ENCODE measurements at regions of chr9 and their contacts with region 1.

Region 1: GRCh38 chr9:74773886-74774479 is 113.7 kb downstream of the TRPM6 start:
- DNase-seq: peak; percentile 81
- ATAC-seq: peak; percentile 75
- H3K4me3 ChIP-seq: no peak overlapping the region
- H3K27ac ChIP-seq: no peak overlapping the region
- H3K4me1 ChIP-seq: no peaks in the 10 kb centered on the region
- H3K27me3 ChIP-seq: no peaks in the 10 kb centered on the region
- CTCF ChIP-seq: peak; percentile 86

Region 2: DNA sequence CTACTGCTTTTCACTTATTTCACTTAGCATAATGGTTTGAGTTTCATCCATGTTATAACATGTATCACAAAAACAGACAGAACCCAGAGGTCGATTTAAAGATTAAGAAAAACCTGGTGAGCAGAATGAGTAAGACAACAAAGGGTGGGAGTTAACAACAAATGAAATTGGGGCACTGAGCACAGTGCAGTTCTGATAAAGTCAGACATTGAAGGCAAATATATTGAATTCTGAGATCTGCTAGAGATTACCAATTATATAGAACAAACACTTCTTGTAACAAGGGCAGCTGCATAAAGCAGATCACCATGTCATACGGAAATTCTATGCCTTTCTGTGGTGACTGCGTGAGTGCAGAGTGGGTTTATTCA is 794.1 kb before region 1 on chr9:
- CTCF ChIA-PET with region 1: no interaction called
- POLR2A ChIA-PET with region 1: no interaction called
- intact Hi-C with region 1: no loop called
- DNase-seq: no peak
- ATAC-seq: no peak
- H3K4me3 ChIP-seq: no peak overlapping the region
- H3K27ac ChIP-seq: no peak overlapping the region
- H3K4me1 ChIP-seq: no peaks in the 10 kb centered on the region
- H3K27me3 ChIP-seq: no peaks in the 10 kb centered on the region
- CTCF ChIP-seq: no peak

Region 3: DNA sequence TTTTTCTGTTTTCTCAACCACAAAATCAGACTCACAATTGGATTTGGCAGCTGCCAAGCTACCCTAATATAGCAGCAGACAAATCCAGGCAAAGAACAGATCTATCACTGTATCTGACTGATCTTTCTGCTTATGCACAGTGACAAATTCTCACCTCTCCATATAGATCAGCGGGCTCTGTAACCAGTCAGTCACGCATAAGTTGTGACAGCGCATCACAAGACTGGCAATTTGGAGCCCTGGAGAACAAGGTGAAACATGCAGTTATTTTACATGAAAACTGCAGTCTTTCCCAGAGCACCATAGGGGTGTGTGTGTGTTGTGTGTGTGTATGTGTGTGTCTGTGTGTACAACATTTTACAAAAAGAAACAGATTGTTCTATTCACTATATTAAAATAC is 239.1 kb before region 1 on chr9:
- CTCF ChIA-PET with region 1: no interaction called
- POLR2A ChIA-PET with region 1: no interaction called
- intact Hi-C with region 1: no loop called
- DNase-seq: no peak
- ATAC-seq: no peak
- H3K4me3 ChIP-seq: no peak overlapping the region
- H3K27ac ChIP-seq: no peak overlapping the region
- H3K4me1 ChIP-seq: no peaks in the 10 kb centered on the region
- H3K27me3 ChIP-seq: no peaks in the 10 kb centered on the region
- CTCF ChIP-seq: no peak

Region 4: GRCh38 chr9:74940600-74940999 is 166.6 kb after region 1 on chr9:
- CTCF ChIA-PET with region 1: interaction called, 4 read pairs
- POLR2A ChIA-PET with region 1: no interaction called
- intact Hi-C with region 1: loop called (anchors 5 kb)
- DNase-seq: peak; percentile 75
- ATAC-seq: peak; percentile 97
- H3K4me3 ChIP-seq: no peak overlapping the region
- H3K27ac ChIP-seq: no peak overlapping the region
- H3K4me1 ChIP-seq: no peaks in the 10 kb centered on the region
- H3K27me3 ChIP-seq: no peaks in the 10 kb centered on the region
- CTCF ChIP-seq: peak; percentile 67

Region 5: GRCh38 chr9:75001719-75002422 is 227.9 kb after region 1 on chr9:
- CTCF ChIA-PET with region 1: no interaction called
- POLR2A ChIA-PET with region 1: no interaction called
- intact Hi-C with region 1: loop called (anchors 1 kb)
- DNase-seq: peak; percentile 76
- ATAC-seq: peak; percentile 87
- H3K4me3 ChIP-seq: no peak overlapping the region
- H3K27ac ChIP-seq: no peak overlapping the region
- H3K4me1 ChIP-seq: no peaks in the 10 kb centered on the region
- H3K27me3 ChIP-seq: no peaks in the 10 kb centered on the region
- CTCF ChIP-seq: peak; percentile 75

Region 6: GRCh38 chr9:75185585-75186170 is 411.7 kb after region 1 on chr9:
- CTCF ChIA-PET with region 1: no interaction called
- POLR2A ChIA-PET with region 1: no interaction called
- intact Hi-C with region 1: loop called (anchors 10 kb)
- DNase-seq: peak; percentile 27
- ATAC-seq: peak; percentile 59
- H3K4me3 ChIP-seq: no peak overlapping the region
- H3K27ac ChIP-seq: no peak overlapping the region
- H3K4me1 ChIP-seq: peaks cover 4% of the 10 kb centered on the region
- H3K27me3 ChIP-seq: no peaks in the 10 kb centered on the region
- CTCF ChIP-seq: peak; percentile 68

Region 7: GRCh38 chr9:76302947-76303940 is 1529.3 kb after region 1 on chr9:
- CTCF ChIA-PET with region 1: no interaction called
- POLR2A ChIA-PET with region 1: no interaction called
- intact Hi-C with region 1: loop called (anchors 5 kb)
- DNase-seq: peak; percentile 39
- ATAC-seq: no peak
- H3K4me3 ChIP-seq: no peak overlapping the region
- H3K27ac ChIP-seq: no peak overlapping the region
- H3K4me1 ChIP-seq: no peaks in the 10 kb centered on the region
- H3K27me3 ChIP-seq: no peaks in the 10 kb centered on the region
- CTCF ChIP-seq: peak; percentile 48

Region 8: DNA sequence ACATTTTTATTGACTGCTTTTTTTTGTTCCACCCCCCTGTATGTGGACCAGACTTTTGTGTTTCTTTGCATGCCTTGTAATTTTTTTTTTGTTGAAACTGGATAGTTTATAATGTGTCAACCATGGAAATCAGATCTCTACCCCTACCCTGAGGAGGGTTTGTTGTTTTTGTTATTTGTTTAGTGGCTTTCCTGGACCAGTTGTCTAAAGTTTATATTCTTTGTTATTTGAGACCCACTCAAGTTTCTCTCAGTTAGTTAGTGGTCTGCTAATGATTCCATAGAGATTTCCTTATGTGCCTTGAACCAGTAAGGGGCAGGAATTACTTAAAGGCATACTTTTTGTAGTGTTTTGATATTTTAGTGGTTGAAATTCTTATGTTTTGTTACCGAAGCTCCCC is 1726.1 kb after region 1 on chr9:
- CTCF ChIA-PET with region 1: no interaction called
- POLR2A ChIA-PET with region 1: no interaction called
- intact Hi-C with region 1: no loop called
- DNase-seq: no peak
- ATAC-seq: no peak
- H3K4me3 ChIP-seq: no peak overlapping the region
- H3K27ac ChIP-seq: no peak overlapping the region
- H3K4me1 ChIP-seq: no peaks in the 10 kb centered on the region
- H3K27me3 ChIP-seq: no peaks in the 10 kb centered on the region
- CTCF ChIP-seq: no peak

Measured in PC-3 (cell line).